ENCODE measurements at regions of chr10 and their contacts with region 1.

Region 1: DNA sequence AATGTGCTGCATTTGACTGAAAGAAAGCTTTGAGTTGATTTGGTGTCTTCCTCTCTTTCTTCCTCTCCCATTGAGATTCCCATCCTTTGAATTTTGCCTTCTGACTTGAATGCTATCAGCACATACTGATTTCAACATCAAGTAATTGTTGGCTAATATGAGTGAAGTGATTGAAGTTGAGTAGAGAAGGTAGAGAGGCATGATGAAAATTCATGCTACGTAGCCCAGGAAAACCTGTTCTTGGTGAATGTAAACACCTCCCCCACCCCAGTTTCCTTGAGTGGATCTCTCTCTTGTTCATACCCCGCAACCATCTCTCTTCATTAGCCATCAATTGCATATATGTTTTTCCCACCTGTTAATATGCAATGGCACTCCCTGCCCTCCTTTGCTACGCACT is 193.3 kb downstream of the FRMD4A start:
- DNase-seq: peak in 1 of 2 experiments; percentile 57
- H3K4me3 ChIP-seq: no peak overlapping the region
- H3K4me3 Mint-ChIP-seq: no peak overlapping the region
- H3K27ac Mint-ChIP-seq: peak overlapping the region; percentile 19
- H3K4me1 ChIP-seq: peaks cover 11% of the 10 kb centered on the region
- H3K4me1 Mint-ChIP-seq: peaks cover 14% of the 10 kb centered on the region
- H3K27me3 ChIP-seq: no peaks in the 10 kb centered on the region
- H3K27me3 Mint-ChIP-seq: peaks cover 6% of the 10 kb centered on the region
- CTCF ChIP-seq: no peak

Region 2: DNA sequence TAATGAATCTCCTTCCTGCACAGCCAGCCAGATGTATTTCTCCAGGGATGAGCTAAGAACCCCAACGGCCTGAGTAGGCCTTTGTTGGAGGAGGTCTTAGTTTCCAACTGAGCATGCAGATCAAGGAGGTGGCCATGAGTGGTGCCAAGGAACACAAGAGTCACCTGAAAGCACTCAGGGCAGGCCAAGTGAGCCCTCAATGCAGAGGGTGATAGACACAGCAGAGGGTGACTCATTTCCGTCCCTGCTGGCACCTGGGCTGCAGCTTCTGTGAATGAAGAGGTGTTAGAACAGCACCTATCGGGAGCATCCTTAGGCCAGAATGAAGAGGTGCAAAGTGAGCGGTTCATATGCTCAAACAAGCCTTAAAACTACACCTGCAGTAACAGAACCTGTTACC is 18.4 kb before region 1 on chr10:
- CTCF ChIA-PET with region 1: no interaction called
- POLR2A ChIA-PET with region 1: no interaction called
- intact Hi-C with region 1: no loop called
- DNase-seq: no peak
- H3K4me3 ChIP-seq: no peak overlapping the region
- H3K4me3 Mint-ChIP-seq: no peak overlapping the region
- H3K27ac Mint-ChIP-seq: no peak overlapping the region
- H3K4me1 ChIP-seq: no peaks in the 10 kb centered on the region
- H3K4me1 Mint-ChIP-seq: no peaks in the 10 kb centered on the region
- H3K27me3 ChIP-seq: no peaks in the 10 kb centered on the region
- H3K27me3 Mint-ChIP-seq: no peaks in the 10 kb centered on the region
- CTCF ChIP-seq: no peak

Region 3: GRCh38 chr10:14173706-14174594 is 36.6 kb after region 1 on chr10:
- CTCF ChIA-PET with region 1: no interaction called
- POLR2A ChIA-PET with region 1: no interaction called
- intact Hi-C with region 1: loop called (anchors 1 kb)
- DNase-seq: peak; percentile 45 to 62
- H3K4me3 ChIP-seq: peak overlapping the region; percentile 50
- H3K4me3 Mint-ChIP-seq: peak overlapping the region; percentile 74
- H3K27ac Mint-ChIP-seq: peak overlapping the region; percentile 14
- H3K4me1 ChIP-seq: 0 out of 2 replicates have a peak, but pooled peaks cover 5% of the 10 kb centered on the region
- H3K4me1 Mint-ChIP-seq: peaks cover 4% of the 10 kb centered on the region
- H3K27me3 ChIP-seq: no peaks in the 10 kb centered on the region
- H3K27me3 Mint-ChIP-seq: peaks cover 15% of the 10 kb centered on the region
- CTCF ChIP-seq: no peak

Measured in Caco-2 (cell line).